ENCODE measurements at regions of chr2 and their contacts with region 1.

Region 1: DNA sequence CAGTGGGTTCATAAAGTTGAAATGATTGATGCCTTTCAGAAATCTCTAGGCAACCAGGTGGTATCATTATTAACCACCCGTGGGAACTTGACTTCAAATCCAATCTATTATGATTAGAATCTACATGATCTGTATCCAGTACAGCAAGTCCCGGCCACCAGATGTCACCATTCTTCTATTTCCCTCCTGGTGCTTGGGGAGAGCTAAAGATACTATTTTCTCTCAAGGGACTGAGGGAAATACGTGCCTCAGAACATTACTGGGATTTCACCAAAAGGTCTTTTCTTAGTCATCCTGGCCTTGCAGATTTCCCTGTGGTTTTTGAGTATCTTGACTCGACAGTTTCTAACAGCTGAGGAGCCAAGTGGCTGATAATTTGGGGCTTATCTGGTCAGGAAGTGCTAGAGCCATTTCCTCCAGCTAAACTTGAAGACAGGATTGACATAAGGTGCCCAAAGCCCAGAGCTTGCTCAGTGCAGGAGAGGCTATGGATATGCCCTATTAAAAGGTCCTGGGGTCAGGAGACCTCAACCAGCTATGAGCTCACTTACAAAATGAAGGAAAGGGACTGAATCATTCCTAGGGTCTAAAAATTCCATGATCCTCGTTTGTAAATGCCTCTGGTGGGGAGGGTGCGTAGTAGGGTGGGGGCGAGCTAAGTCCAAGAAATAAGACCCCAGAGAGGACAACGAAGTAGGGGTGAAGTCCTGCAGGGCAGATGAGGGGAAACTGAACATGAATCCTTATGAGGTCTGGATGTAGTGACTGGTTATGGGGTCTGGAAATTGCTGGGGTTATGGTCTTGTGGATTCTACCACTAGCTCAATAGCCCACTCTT is 135.4 kb upstream of the MGAT5 start:
- H3K4me3 ChIP-seq: no peak overlapping the region
- H3K27ac ChIP-seq: no peak overlapping the region
- H3K4me1 ChIP-seq: peaks cover 13% of the 10 kb centered on the region
- CTCF ChIP-seq: peak; percentile 40; the same call in 1 of the 2 replicates

Region 2: DNA sequence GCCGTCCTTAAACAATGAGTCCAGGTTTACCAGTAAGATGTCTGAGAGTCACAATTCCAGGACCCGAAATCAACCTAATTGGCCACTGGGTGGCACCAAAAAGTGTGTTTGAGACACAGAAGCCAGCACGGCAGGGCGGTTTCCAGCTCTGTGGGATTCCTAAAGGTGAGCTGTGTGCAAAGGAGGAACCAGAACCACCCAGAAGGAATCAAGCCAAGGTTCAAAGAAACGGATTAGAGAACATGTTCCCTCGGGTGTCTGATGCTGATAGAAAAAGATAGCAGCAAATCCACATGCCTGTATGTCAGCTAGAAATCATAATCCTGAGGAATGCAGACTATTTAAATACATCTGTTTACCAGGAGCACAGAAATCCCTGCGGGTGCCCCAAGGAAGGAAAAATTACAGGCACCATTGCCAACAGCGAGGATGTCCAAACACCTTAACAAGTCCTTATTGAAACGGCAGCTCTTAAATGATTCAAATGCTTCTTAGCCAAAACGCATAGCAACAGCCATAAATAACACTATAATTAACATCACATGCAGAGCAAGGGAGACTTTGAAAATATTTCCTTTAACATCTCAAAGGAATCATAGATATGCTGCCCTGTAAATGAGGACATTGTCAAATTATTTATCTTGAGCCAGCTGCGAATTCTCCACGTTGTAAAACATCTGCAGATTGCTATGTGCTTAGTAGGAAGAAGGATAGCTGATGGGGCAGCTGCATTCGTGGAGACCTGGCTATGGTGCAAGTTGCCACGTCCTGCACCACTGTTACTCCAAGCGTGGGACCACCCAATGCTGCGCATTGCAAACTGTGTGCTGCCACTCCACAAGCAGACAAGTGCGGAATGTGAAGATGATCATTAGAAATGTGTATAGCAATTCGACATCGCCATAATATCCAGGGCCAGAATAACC is 231.5 kb before region 1 on chr2:
- CTCF ChIA-PET with region 1: interaction called, 44 read pairs
- POLR2A ChIA-PET with region 1: no interaction called
- H3K4me3 ChIP-seq: no peak overlapping the region
- H3K27ac ChIP-seq: no peak overlapping the region
- H3K4me1 ChIP-seq: no peaks in the 10 kb centered on the region; the same call in 1 of the 2 replicates
- CTCF ChIP-seq: peak; percentile 43; the same call in 1 of the 2 replicates

Region 3: DNA sequence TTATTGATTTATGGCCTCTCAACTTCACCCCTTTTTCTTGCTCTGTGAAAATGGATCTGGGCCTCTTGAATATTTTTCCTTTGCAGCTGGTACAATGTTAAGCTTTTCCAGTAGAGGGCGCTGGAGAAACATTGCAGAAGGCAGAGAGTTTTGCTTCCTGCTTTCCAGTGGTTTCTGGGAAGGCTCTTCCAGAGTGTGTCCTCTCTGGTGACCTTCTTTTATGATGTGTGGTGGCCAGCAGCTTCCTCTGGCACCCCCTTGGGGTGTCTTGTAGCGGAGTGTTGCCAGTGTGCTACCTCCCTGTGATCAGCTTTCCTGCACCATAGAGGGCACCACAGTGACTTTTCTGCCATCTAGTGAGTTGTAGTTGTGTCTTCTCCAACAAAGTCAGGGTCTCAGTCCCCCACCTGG is 110.0 kb after region 1 on chr2:
- CTCF ChIA-PET with region 1: interaction called, 21 read pairs
- POLR2A ChIA-PET with region 1: no interaction called
- H3K4me3 ChIP-seq: no peak overlapping the region
- H3K27ac ChIP-seq: no peak overlapping the region
- H3K4me1 ChIP-seq: no peaks in the 10 kb centered on the region
- CTCF ChIP-seq: 0 out of 2 replicates have a peak, but pooled peaks have one; percentile 14

Region 4: GRCh38 chr2:134348239-134348638 is 229.7 kb after region 1 on chr2:
- CTCF ChIA-PET with region 1: no interaction called
- POLR2A ChIA-PET with region 1: no interaction called
- H3K4me3 ChIP-seq: no peak overlapping the region
- H3K27ac ChIP-seq: no peak overlapping the region
- H3K4me1 ChIP-seq: no peaks in the 10 kb centered on the region
- CTCF ChIP-seq: no peak